ENCODE measurements at regions of chr7 and their contacts with region 1.

Region 1: GRCh38 chr7:29189743-29190201 is 4.8 kb upstream of the CHN2 start:
- DNase-seq: peak; percentile 50
- H3K4me3 ChIP-seq: no peak overlapping the region
- H3K27ac ChIP-seq: no peak overlapping the region
- H3K4me1 ChIP-seq: peaks cover 23% of the 10 kb centered on the region
- H3K27me3 ChIP-seq: peaks cover 20% of the 10 kb centered on the region
- CTCF ChIP-seq: peak; percentile 82

Region 2: GRCh38 chr7:29057046-29057445 is 132.7 kb before region 1 on chr7:
- intact Hi-C with region 1: no loop called
- DNase-seq: no peak
- H3K4me3 ChIP-seq: no peak overlapping the region
- H3K27ac ChIP-seq: no peak overlapping the region
- H3K4me1 ChIP-seq: no peaks in the 10 kb centered on the region
- H3K27me3 ChIP-seq: no peaks in the 10 kb centered on the region
- CTCF ChIP-seq: no peak

Region 3: DNA sequence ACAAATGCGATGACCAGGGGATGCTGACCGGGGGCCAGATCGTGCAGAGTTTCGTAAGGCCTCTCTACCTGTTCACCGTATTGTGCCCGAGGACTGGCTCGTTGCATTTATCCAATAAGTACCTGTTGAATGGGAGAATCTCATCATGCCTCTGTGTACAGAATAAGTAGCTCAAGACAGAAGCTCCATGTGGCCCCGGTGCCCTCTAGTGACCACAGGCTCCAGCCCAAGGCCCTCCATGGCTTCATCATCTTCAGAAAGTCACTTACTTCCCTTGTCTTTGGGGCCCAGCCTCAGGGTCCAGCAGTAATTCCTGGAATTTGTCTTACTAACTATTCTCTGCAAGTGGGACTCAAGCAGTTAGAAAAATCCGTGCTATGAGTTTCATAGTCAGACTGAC is 155.8 kb after region 1 on chr7:
- intact Hi-C with region 1: loop called (anchors 5 kb)
- DNase-seq: peak; percentile 31
- H3K4me3 ChIP-seq: no peak overlapping the region
- H3K27ac ChIP-seq: no peak overlapping the region
- H3K4me1 ChIP-seq: peaks cover 4% of the 10 kb centered on the region
- H3K27me3 ChIP-seq: no peaks in the 10 kb centered on the region
- CTCF ChIP-seq: peak; percentile 60

Region 4: DNA sequence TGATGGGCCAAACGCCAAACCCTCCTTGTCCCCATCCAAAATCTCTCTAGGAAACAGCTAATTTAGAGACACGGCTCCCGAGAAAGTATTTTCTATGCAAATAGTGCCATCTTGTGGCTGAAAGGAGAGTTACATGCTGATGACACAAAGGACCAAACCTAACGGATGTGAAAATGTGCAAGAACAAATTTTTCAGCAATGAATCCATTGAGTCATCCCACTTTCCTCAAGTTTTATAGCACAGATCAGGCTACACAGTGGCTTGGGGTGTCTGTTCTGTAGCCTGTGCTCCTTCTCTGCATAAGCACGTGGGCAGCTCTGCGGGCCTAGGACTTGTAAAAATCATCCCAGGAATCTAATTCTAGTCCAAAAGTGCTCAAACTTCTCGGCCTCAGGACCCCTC is 219.1 kb after region 1 on chr7:
- intact Hi-C with region 1: loop called (anchors 10 kb)
- DNase-seq: no peak
- H3K4me3 ChIP-seq: no peak overlapping the region
- H3K27ac ChIP-seq: no peak overlapping the region
- H3K4me1 ChIP-seq: no peaks in the 10 kb centered on the region
- H3K27me3 ChIP-seq: no peaks in the 10 kb centered on the region
- CTCF ChIP-seq: peak; percentile 88